B cell (primary cell): ENCODE measurements at regions of chr9 and their contacts with region 1.

Region 1: DNA sequence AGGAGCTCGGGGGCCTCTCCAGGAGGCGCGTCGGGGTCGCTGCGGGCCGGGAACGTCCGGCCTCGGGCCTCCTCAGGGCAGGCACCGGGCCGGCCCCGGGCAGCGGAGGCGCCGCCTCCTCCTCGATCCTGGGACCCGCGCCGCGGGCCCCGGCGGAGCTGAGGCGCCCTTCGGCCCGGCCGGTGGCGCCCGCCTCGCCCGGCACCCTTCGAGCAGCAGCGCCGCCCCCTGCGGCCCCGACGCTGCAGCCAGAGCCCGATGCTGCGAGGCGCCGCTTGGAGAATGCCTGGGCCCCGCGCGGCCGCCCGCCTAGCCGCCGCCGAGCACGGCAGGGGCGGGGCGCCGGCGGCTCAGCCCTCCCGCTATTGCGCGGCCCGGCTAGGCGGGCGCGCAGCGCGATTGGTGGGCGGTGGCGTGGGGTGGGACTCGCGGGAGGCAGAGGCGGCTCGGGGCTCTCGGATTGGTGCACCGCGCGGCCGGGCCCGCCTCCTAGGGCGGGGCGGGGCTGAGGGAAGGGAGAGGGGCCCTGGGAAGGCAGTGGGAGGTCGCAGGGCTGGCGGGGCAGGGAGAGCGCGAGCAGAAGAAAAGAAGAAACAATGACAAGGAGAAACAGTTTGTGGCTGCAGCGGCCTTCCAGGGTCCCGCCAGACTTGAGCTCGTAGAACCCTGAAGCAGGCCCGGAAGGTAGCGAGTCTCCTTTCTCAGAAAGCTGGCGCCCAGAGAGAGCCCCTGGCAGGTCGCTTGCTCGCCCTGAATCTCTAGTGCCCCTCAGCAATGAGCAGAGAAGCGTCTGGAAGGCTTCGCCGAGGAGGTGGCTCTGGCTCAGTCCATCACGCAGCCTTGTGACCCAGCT is at the start of gene EEIG1:
- DNase-seq: peak; percentile 97
- ATAC-seq: peak; percentile 77
- H3K4me3 ChIP-seq: peak within 1 kb of the TSS; percentile 70 to 95 (median 82)
- H3K4me3 Mint-ChIP-seq: peak within 1 kb of the TSS; percentile 97
- H3K27ac ChIP-seq: peak within 1 kb of the TSS; percentile 87 to 93
- H3K27ac Mint-ChIP-seq: peak within 1 kb of the TSS; percentile 98
- H3K4me1 ChIP-seq: peaks cover 66 to 85% of the 10 kb centered on the region in 2 donors
- H3K4me1 Mint-ChIP-seq: peaks cover 68% of the 10 kb centered on the region
- H3K27me3 ChIP-seq: no peaks in the 10 kb centered on the region
- H3K27me3 Mint-ChIP-seq: no peaks in the 10 kb centered on the region
- CTCF ChIP-seq: no peak
- total RNA-seq, gene EEIG1: 245 and 267 TPM in 2 replicates

Region 2: GRCh38 chr9:127955294-127956035 is 25.5 kb before region 1 on chr9:
- CTCF ChIA-PET with region 1: interaction called, 182 read pairs
- POLR2A ChIA-PET with region 1: interaction called, 10 read pairs
- intact Hi-C with region 1: loop called (anchors 1 kb)
- DNase-seq: peak; percentile 77
- ATAC-seq: peak; percentile 97
- H3K4me3 ChIP-seq: no peak overlapping the region
- H3K4me3 Mint-ChIP-seq: peak overlapping the region; percentile 16
- H3K27ac ChIP-seq: peak overlapping the region in 1 of 2 donors; percentile 46
- H3K27ac Mint-ChIP-seq: peak overlapping the region; percentile 80
- H3K4me1 ChIP-seq: peaks cover 8 to 30% of the 10 kb centered on the region in 2 donors
- H3K4me1 Mint-ChIP-seq: peaks cover 53% of the 10 kb centered on the region
- H3K27me3 ChIP-seq: no peaks in the 10 kb centered on the region
- H3K27me3 Mint-ChIP-seq: no peaks in the 10 kb centered on the region
- CTCF ChIP-seq: peak; percentile 63

Region 3: DNA sequence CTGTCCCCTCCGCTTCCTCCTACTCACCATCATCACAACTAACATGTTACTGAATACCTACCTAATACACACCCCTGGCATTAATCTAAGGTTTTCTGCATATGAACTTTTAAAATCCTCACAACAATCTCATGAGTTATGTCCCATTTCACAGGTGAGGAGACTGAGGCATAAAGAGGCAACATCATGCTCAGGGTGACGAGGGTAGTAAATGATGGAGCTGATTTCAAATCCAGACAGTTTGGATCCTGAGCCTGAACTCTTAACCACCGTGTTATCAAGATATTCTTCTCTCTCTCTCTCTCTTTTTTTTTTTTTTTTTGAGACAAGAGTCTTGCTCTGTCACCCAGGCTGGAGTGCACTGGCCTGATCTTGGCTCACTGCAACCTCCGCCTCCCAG is 12.8 kb after region 1 on chr9:
- CTCF ChIA-PET with region 1: interaction called, 3 read pairs
- POLR2A ChIA-PET with region 1: interaction called, 12 read pairs
- intact Hi-C with region 1: no loop called
- DNase-seq: no peak
- ATAC-seq: no peak
- H3K4me3 ChIP-seq: no peak overlapping the region
- H3K4me3 Mint-ChIP-seq: no peak overlapping the region
- H3K27ac ChIP-seq: no peak overlapping the region
- H3K27ac Mint-ChIP-seq: peak overlapping the region; percentile 70
- H3K4me1 ChIP-seq: peaks cover 19 to 20% of the 10 kb centered on the region in 2 donors
- H3K4me1 Mint-ChIP-seq: peaks cover 29% of the 10 kb centered on the region
- H3K27me3 ChIP-seq: no peaks in the 10 kb centered on the region
- H3K27me3 Mint-ChIP-seq: no peaks in the 10 kb centered on the region
- CTCF ChIP-seq: no peak

Region 4: GRCh38 chr9:128007566-128008138 is 26.7 kb after region 1 on chr9:
- CTCF ChIA-PET with region 1: interaction called, 7 read pairs
- POLR2A ChIA-PET with region 1: interaction called, 27 read pairs
- intact Hi-C with region 1: loop called (anchors 1 kb)
- DNase-seq: peak; percentile 92
- ATAC-seq: peak; percentile 80
- H3K4me3 ChIP-seq: peak overlapping the region in 3 of 5 experiments; percentile 0 to 35 (median 10)
- H3K4me3 Mint-ChIP-seq: peak overlapping the region; percentile 82
- H3K27ac ChIP-seq: peak overlapping the region; percentile 81 to 93
- H3K27ac Mint-ChIP-seq: peak overlapping the region; percentile 91
- H3K4me1 ChIP-seq: peaks cover 56 to 72% of the 10 kb centered on the region in 2 donors
- H3K4me1 Mint-ChIP-seq: peaks cover 60% of the 10 kb centered on the region
- H3K27me3 ChIP-seq: no peaks in the 10 kb centered on the region
- H3K27me3 Mint-ChIP-seq: no peaks in the 10 kb centered on the region
- CTCF ChIP-seq: no peak

Region 5: DNA sequence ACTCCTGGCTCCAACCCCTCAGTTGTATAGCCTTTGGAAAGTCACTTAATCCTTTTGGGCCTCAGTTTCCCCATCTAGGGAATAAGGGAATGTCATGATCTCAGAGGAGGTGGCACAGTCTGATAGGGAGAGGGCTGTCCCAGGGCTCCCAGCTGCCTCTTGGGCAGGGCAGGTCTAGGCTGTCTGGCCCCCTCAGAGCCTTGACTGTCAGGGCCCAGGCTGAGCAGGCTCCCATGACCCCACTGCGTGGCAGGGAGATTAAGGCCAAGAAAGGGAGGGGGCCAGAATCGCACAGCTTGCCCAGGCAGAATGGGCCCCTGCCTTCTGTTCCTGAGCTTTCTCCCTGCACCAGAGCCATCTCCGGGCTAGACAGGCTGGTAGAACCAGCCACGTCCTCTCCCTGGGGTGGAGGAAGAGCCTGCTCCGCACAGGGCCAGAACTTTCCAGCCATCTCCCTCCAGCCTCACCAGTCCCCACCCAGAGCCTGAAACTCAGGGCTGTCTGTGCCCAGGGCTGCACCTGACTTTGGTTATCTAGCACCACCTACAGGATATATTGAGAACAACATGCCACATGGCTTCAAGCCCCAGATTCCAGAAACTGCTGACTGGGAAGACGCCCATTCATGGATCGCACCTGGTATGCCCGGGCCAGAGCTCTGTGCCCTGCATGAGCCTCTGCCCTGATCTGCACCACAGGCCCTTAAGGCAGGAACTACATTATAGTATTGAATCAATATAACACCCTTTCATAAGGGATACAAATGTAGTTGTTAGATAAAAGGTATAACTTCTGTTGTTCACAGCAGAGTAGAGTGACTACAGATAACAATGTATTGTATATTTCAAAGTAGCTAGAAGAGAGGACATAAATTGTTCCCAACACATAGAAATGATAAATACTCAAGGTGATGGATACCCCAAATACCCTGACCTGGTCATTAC is 54.2 kb after region 1 on chr9:
- CTCF ChIA-PET with region 1: interaction called, 282 read pairs
- POLR2A ChIA-PET with region 1: interaction called, 212 read pairs
- intact Hi-C with region 1: loop called (anchors 2 kb)
- DNase-seq: peak; percentile 88
- ATAC-seq: peak; percentile 82
- H3K4me3 ChIP-seq: no peak overlapping the region
- H3K4me3 Mint-ChIP-seq: no peak overlapping the region
- H3K27ac ChIP-seq: no peak overlapping the region
- H3K27ac Mint-ChIP-seq: peak overlapping the region; percentile 71
- H3K4me1 ChIP-seq: peaks cover 29 to 46% of the 10 kb centered on the region in 2 donors
- H3K4me1 Mint-ChIP-seq: peaks cover 33% of the 10 kb centered on the region
- H3K27me3 ChIP-seq: no peaks in the 10 kb centered on the region
- H3K27me3 Mint-ChIP-seq: no peaks in the 10 kb centered on the region
- CTCF ChIP-seq: peak; percentile 93

Region 6: GRCh38 chr9:128127990-128128835 is 147.3 kb after region 1 on chr9:
- CTCF ChIA-PET with region 1: no interaction called
- POLR2A ChIA-PET with region 1: no interaction called
- intact Hi-C with region 1: loop called (anchors 1 kb)
- DNase-seq: peak; percentile 97
- ATAC-seq: peak; percentile 78
- H3K4me3 ChIP-seq: peak overlapping the region; percentile 58 to 97 (median 83)
- H3K4me3 Mint-ChIP-seq: peak overlapping the region; percentile 95
- H3K27ac ChIP-seq: peak overlapping the region; percentile 93 to 99
- H3K27ac Mint-ChIP-seq: peak overlapping the region; percentile 99
- H3K4me1 ChIP-seq: peaks cover 26 to 34% of the 10 kb centered on the region in 2 donors
- H3K4me1 Mint-ChIP-seq: peaks cover 35% of the 10 kb centered on the region
- H3K27me3 ChIP-seq: peaks cover 0 to 6% (median 0%) of the 10 kb centered on the region in 4 experiments
- H3K27me3 Mint-ChIP-seq: peaks cover 7% of the 10 kb centered on the region
- CTCF ChIP-seq: no peak

Region 7: GRCh38 chr9:128275198-128275995 is 294.5 kb after region 1 on chr9:
- CTCF ChIA-PET with region 1: no interaction called
- POLR2A ChIA-PET with region 1: no interaction called
- intact Hi-C with region 1: no loop called
- DNase-seq: peak; percentile 57
- ATAC-seq: peak; percentile 58
- H3K4me3 ChIP-seq: peak overlapping the region; percentile 11 to 99 (median 87)
- H3K4me3 Mint-ChIP-seq: peak overlapping the region; percentile 96
- H3K27ac ChIP-seq: peak overlapping the region; percentile 81 to 92
- H3K27ac Mint-ChIP-seq: peak overlapping the region; percentile 97
- H3K4me1 ChIP-seq: peaks cover 14 to 20% of the 10 kb centered on the region in 2 donors
- H3K4me1 Mint-ChIP-seq: peaks cover 23% of the 10 kb centered on the region
- H3K27me3 ChIP-seq: no peaks in the 10 kb centered on the region
- H3K27me3 Mint-ChIP-seq: no peaks in the 10 kb centered on the region
- CTCF ChIP-seq: no peak